SK-N-SH (cell line): ENCODE measurements at regions of chr4 and their contacts with region 1.

Region 1: GRCh38 chr4:184263910-184264732 is 46.4 kb upstream of the ENPP6 start:
- DNase-seq: peak; percentile 81
- H3K4me3 ChIP-seq: no peak overlapping the region; a peak in 1 of 4 replicates
- H3K27ac ChIP-seq: no peak overlapping the region
- H3K4me1 ChIP-seq: peaks cover 2 to 17% of the 10 kb centered on the region in 2 experiments; a peak in 2 of 4 replicates
- H3K27me3 ChIP-seq: no peaks in the 10 kb centered on the region
- CTCF ChIP-seq: peak; percentile 86
- EP300 ChIP-seq: no peak
- RAD21 ChIP-seq: peak; percentile 90

Region 2: DNA sequence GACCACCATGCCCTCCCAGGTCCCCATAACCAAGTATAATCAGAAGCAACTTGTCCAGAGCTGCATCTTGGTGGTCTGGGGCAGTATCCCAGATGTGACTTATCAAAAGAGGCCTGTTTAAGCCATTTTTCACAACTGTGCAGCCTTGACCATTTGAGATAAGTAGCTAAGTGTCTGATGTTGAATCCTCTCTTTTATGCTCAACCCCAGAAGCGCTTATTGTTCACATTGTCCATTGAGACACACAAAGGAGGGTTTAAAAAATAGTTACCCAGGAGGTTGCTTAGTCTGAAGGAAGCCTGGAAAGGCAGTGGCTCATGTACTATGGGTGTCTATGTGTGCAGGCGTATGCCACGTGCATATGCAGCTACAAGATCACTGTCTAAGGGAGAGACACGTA is 73.4 kb before region 1 on chr4:
- CTCF ChIA-PET with region 1: no interaction called
- POLR2A ChIA-PET with region 1: no interaction called
- DNase-seq: no peak
- H3K4me3 ChIP-seq: no peak overlapping the region
- H3K27ac ChIP-seq: no peak overlapping the region
- H3K4me1 ChIP-seq: peaks cover 0 to 4% of the 10 kb centered on the region in 2 experiments; a peak in 1 of 4 replicates
- H3K27me3 ChIP-seq: no peaks in the 10 kb centered on the region
- CTCF ChIP-seq: no peak
- EP300 ChIP-seq: no peak
- RAD21 ChIP-seq: no peak

Region 3: GRCh38 chr4:184282251-184282713 is 18.2 kb after region 1 on chr4:
- CTCF ChIA-PET with region 1: interaction called, 20 read pairs
- POLR2A ChIA-PET with region 1: no interaction called
- DNase-seq: no peak
- H3K4me3 ChIP-seq: no peak overlapping the region
- H3K27ac ChIP-seq: no peak overlapping the region
- H3K4me1 ChIP-seq: no peaks in the 10 kb centered on the region
- H3K27me3 ChIP-seq: no peaks in the 10 kb centered on the region
- CTCF ChIP-seq: no peak
- EP300 ChIP-seq: no peak
- RAD21 ChIP-seq: peak; percentile 26; the same call in 1 of the 2 replicates

Region 4: GRCh38 chr4:184306949-184307348 is 42.8 kb after region 1 on chr4:
- CTCF ChIA-PET with region 1: interaction called, 11 read pairs
- POLR2A ChIA-PET with region 1: no interaction called
- DNase-seq: no peak
- H3K4me3 ChIP-seq: no peak overlapping the region
- H3K27ac ChIP-seq: no peak overlapping the region
- H3K4me1 ChIP-seq: no peaks in the 10 kb centered on the region
- H3K27me3 ChIP-seq: no peaks in the 10 kb centered on the region
- CTCF ChIP-seq: no peak
- EP300 ChIP-seq: no peak
- RAD21 ChIP-seq: no peak

Region 5: GRCh38 chr4:184538023-184538599 is 274.0 kb after region 1 on chr4:
- CTCF ChIA-PET with region 1: interaction called, 72 read pairs
- POLR2A ChIA-PET with region 1: interaction called, 16 read pairs
- DNase-seq: peak; percentile 79
- H3K4me3 ChIP-seq: peak overlapping the region; percentile 72 to 90
- H3K27ac ChIP-seq: peak overlapping the region; percentile 96
- H3K4me1 ChIP-seq: peaks cover 4 to 8% of the 10 kb centered on the region in 2 experiments; a peak in 3 of 4 replicates
- H3K27me3 ChIP-seq: no peaks in the 10 kb centered on the region
- CTCF ChIP-seq: peak; percentile 78
- EP300 ChIP-seq: no peak
- RAD21 ChIP-seq: peak; percentile 98

Region 6: GRCh38 chr4:184550476-184550875 is 286.4 kb after region 1 on chr4:
- CTCF ChIA-PET with region 1: interaction called, 19 read pairs
- POLR2A ChIA-PET with region 1: interaction called, 3 read pairs
- DNase-seq: no peak
- H3K4me3 ChIP-seq: no peak overlapping the region
- H3K27ac ChIP-seq: no peak overlapping the region
- H3K4me1 ChIP-seq: peaks cover 0 to 11% of the 10 kb centered on the region in 2 experiments; a peak in 2 of 4 replicates
- H3K27me3 ChIP-seq: no peaks in the 10 kb centered on the region
- CTCF ChIP-seq: no peak
- EP300 ChIP-seq: no peak
- RAD21 ChIP-seq: no peak

Region 7: DNA sequence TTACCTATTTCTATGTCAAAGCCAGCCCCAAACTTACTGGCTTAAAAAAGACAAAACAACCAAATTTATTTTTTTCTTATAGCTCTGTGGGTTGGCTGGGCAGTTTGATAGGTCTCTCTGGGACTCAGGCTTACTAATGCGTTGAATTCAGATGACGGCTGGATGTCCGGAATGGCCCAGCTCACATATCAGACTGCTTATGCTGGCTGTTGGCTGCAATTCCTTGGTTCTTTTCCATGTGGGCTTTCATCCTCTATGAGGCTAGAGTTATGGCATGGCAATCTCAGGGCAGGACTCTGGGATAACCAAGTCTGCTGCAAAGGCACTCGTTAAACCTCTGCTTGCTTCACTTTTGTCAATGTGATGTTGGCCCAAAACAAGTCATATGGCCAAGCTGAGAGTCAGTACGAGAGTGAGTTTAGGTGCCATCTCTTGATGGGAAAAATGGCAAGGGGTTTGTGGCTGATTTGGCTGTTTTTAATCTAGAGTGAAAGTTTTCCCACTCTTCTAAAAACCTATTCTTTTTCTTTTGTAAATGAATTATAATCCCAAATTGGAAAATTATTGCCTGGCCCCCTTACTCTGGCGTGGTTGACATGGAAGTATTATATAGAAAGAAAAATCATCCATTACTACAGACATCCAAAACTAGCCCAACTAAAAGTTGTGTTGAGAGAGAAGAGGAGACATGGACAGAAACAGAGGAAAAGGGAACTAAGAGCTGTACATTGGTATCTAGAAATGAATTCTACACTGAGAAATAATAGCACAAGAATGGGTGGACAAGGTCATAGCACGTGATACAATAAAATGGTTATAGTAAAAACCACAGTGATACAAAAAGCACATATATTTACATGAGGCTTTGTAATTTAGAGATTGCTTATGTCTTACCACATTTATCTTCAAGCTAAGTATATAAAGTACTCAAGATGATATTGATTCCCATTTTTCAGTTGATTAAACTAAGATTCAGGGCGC is 392.1 kb after region 1 on chr4:
- CTCF ChIA-PET with region 1: no interaction called
- POLR2A ChIA-PET with region 1: no interaction called
- DNase-seq: no peak
- H3K4me3 ChIP-seq: no peak overlapping the region
- H3K27ac ChIP-seq: no peak overlapping the region
- H3K4me1 ChIP-seq: no peaks in the 10 kb centered on the region
- H3K27me3 ChIP-seq: no peaks in the 10 kb centered on the region
- CTCF ChIP-seq: no peak
- EP300 ChIP-seq: no peak
- RAD21 ChIP-seq: no peak